Colonic mucosa (tissue), 4 donors: ENCODE measurements at regions of chr9 and their contacts with region 1.

Region 1: GRCh38 chr9:97928986-97929604 is 6.8 kb upstream of the TRMO start:
- DNase-seq: no peak
- H3K4me3 ChIP-seq: no peak overlapping the region
- H3K27ac ChIP-seq: no peak overlapping the region
- H3K4me1 ChIP-seq: no peaks in the 10 kb centered on the region
- H3K27me3 ChIP-seq: no peaks in the 10 kb centered on the region
- CTCF ChIP-seq: no peak

Region 2: DNA sequence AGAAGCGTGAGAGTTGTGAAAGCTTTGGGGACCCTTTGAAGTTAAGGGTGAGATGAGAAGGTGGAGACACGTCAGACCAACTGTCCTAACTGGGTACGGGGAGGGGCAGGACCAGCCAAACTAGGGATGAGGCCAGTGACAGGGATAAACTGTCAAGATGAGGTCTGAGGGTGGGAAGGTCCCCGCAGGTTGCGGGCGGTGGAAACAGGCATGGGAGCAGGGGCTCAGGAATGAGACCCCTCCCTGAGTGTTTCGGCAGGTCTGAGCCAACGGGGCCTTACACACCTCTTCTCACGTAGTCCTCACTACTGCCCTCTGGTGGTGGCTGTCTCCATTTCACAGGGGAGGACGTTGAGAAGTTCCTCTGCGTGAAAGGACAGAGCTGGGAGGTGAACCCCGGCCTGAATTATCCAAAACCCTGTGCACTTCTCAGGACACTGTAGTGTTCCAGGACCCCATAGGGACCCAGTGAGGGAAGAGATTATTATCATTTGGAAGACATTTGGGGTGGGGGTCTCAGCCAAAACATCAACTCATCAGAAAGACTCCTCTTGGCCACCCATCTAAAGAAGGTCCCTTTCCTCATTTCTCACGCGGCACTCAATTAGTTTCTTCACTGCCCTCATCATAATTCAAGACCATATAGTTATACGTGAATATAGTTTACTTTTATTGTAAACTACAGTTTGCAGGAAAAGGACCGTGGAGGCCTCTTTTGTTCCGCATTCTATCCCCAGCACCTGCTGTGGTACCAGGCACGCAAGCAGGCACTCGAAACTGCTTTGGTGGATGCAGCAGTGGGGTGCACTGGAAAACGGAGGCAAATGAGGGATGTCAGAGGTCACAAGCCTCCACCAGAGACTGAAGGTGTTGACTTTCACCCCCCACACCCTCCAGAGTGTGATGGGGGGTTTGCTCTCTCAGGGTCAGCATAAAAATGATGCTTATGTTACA is 105.8 kb after region 1 on chr9:
- intact Hi-C with region 1: loop called (anchors 5 kb)
- DNase-seq: peak; percentile 92
- H3K4me3 ChIP-seq: no peak overlapping the region
- H3K27ac ChIP-seq: no peak overlapping the region
- H3K4me1 ChIP-seq: no peaks in the 10 kb centered on the region
- H3K27me3 ChIP-seq: no peaks in the 10 kb centered on the region
- CTCF ChIP-seq: peak; percentile 82